GM12878 (cell line): ENCODE measurements at regions of chr2 and their contacts with region 1.

Region 1: GRCh38 chr2:62014102-62014501 is 108.6 kb downstream of the COMMD1 start:
- DNase-seq: no peak
- ATAC-seq: peak; percentile 22; the same call in 1 of the 3 replicates
- H3K4me3 ChIP-seq: no peak overlapping the region
- H3K27ac ChIP-seq: no peak overlapping the region
- H3K4me1 ChIP-seq: peaks cover 8% of the 10 kb centered on the region; the same call in 1 of the 2 replicates
- H3K27me3 ChIP-seq: no peaks in the 10 kb centered on the region
- CTCF ChIP-seq: no peak
- EP300 ChIP-seq: no peak
- POLR2A ChIP-seq: no peak
- RAD21 ChIP-seq: no peak

Region 2: DNA sequence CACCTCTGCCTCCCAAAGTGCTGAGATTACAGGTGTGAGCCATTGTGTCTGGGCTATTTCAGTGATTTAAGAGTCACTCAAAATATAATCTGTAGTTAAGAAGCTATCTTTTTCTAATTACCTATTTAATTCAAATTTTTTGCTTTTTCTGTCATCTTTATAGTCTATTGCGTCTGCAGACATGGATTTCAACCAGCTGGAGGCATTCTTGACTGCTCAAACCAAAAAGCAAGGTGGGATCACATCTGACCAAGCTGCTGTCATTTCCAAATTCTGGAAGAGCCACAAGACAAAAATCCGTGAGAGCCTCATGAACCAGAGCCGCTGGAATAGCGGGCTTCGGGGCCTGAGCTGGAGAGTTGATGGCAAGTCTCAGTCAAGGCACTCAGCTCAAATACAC is 13.6 kb before region 1 on chr2:
- CTCF ChIA-PET with region 1: interaction called, 40 read pairs
- POLR2A ChIA-PET with region 1: interaction called, 3 read pairs
- RAD21 ChIA-PET with region 1: interaction called, 16 read pairs
- SMC1A ChIA-PET with region 1: interaction called, 38 read pairs
- in situ Hi-C with region 1: no loop called
- intact Hi-C with region 1: no loop called
- DNase-seq: no peak
- ATAC-seq: no peak
- H3K4me3 ChIP-seq: no peak overlapping the region
- H3K27ac ChIP-seq: no peak overlapping the region
- H3K4me1 ChIP-seq: peaks cover 10% of the 10 kb centered on the region; the same call in 1 of the 2 replicates
- H3K27me3 ChIP-seq: no peaks in the 10 kb centered on the region
- CTCF ChIP-seq: no peak
- EP300 ChIP-seq: no peak
- POLR2A ChIP-seq: no peak
- RAD21 ChIP-seq: peak; percentile 25; the same call in 1 of the 2 replicates

Region 3: DNA sequence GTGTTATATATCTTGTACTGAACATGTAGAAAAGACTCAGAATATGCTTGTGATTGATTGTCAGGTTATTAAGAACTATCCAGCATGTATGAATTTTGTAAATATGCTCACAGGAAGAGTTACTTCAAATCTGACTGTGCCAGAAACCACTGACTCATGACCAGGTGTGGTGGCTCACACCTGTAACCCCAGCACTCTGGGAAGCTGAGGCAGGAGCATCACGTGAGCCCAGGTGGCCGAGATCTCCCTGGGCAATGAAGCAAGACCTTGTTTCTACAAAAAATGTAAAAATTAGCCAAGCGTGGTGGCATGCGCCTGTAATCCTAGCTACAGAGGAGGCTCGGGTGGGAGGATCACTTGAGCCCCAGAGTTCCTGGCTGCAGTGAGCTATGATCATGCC is 18.0 kb after region 1 on chr2:
- CTCF ChIA-PET with region 1: interaction called, 3 read pairs
- POLR2A ChIA-PET with region 1: interaction called, 5 read pairs
- RAD21 ChIA-PET with region 1: no interaction called
- SMC1A ChIA-PET with region 1: interaction called, 17 read pairs
- in situ Hi-C with region 1: no loop called
- intact Hi-C with region 1: no loop called
- DNase-seq: no peak
- ATAC-seq: peak; percentile 62
- H3K4me3 ChIP-seq: no peak overlapping the region
- H3K27ac ChIP-seq: no peak overlapping the region
- H3K4me1 ChIP-seq: peaks cover 14% of the 10 kb centered on the region
- H3K27me3 ChIP-seq: no peaks in the 10 kb centered on the region
- CTCF ChIP-seq: no peak
- EP300 ChIP-seq: no peak
- POLR2A ChIP-seq: no peak
- RAD21 ChIP-seq: no peak

Region 4: DNA sequence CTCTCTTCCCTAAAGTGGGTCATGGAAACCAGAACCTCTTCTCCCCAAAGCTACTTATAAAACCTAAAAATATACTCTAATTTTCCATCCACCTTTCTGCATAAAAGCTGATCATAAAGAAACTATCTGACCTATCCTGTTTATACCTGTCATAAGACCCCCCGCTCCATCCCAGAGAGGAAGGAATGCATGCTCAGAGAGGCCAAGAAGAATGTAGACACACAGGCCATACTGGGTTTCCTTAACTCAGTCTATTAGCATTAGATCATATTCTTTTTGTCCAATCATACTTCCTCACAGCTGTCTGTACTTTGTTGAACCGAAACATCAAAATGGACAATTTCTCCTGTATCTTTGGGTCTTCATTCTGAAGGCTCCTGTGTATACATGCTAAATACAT is 234.1 kb after region 1 on chr2:
- CTCF ChIA-PET with region 1: no interaction called
- POLR2A ChIA-PET with region 1: no interaction called
- RAD21 ChIA-PET with region 1: no interaction called
- SMC1A ChIA-PET with region 1: no interaction called
- in situ Hi-C with region 1: no loop called
- intact Hi-C with region 1: no loop called
- DNase-seq: no peak
- ATAC-seq: no peak
- H3K4me3 ChIP-seq: no peak overlapping the region
- H3K27ac ChIP-seq: no peak overlapping the region
- H3K4me1 ChIP-seq: no peaks in the 10 kb centered on the region
- H3K27me3 ChIP-seq: no peaks in the 10 kb centered on the region
- CTCF ChIP-seq: no peak
- EP300 ChIP-seq: no peak
- POLR2A ChIP-seq: no peak
- RAD21 ChIP-seq: no peak